IMR-90 (cell line): ENCODE measurements at regions of chr1 and their contacts with region 1.

Region 1: DNA sequence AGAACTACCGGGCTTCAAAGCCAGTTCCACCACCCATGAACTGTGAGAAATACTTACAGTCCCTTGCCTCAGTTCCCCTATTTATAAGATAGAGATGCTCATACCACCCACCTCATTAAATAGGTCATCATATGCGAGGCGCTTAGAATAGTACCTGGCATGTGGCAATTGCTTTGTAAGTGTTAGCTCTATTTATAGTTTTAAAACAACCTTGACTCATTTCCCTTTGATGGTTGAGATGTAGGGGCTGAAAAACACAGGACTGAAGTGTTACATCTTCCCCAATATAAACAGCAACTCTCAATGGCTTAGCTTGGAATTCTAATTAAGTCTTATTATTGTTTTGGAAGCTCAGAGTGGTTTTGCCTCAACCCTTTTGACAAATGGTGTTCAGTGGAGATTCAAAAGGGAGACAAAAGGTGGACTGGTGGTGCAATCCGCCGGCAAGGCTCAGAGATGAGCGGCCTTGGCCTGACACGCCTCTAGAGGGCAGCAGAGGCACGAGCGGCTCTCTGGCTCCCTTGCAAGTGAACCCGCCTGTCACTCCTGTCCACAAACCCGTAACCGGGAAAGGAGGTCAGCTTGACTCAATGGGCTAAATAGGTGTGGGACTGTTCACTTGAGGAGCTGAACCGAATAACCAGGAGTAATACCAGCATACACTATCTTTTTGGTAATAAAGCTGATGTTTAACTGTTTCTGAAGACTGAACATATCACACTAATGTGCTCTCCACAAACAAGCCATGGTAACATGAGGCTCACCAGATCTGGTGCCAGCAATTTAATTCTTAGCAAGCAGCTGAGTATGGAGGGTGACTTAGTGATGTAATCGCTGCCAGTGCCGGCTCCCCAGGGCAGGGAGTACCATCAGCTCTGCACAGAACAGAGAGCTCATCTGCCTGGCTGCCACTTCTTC is 19.5 kb upstream of the SMYD2 start:
- DNase-seq: peak; percentile 69
- ATAC-seq: peak; percentile 99
- H3K4me3 ChIP-seq: no peak overlapping the region
- H3K27ac ChIP-seq: no peak overlapping the region
- H3K4me1 ChIP-seq: peaks cover 4% of the 10 kb centered on the region; the same call in 1 of the 2 replicates
- H3K27me3 ChIP-seq: peaks cover 13% of the 10 kb centered on the region
- CTCF ChIP-seq: peak; percentile 91
- POLR2A ChIP-seq: no peak
- RAD21 ChIP-seq: peak; percentile 91

Region 2: GRCh38 chr1:214213136-214213535 is 48.3 kb before region 1 on chr1:
- CTCF ChIA-PET with region 1: interaction called, 17 read pairs
- POLR2A ChIA-PET with region 1: no interaction called
- dilution Hi-C with region 1: no loop called
- in situ Hi-C with region 1: no loop called
- intact Hi-C with region 1: loop called (anchors 2 kb)
- DNase-seq: peak; percentile 18
- ATAC-seq: peak; percentile 48
- H3K4me3 ChIP-seq: no peak overlapping the region
- H3K27ac ChIP-seq: no peak overlapping the region
- H3K4me1 ChIP-seq: no peaks in the 10 kb centered on the region; the same call in 1 of the 2 replicates
- H3K27me3 ChIP-seq: peaks cover 38% of the 10 kb centered on the region
- CTCF ChIP-seq: no peak
- POLR2A ChIP-seq: no peak
- RAD21 ChIP-seq: no peak

Region 3: GRCh38 chr1:214251354-214251753 is 10.1 kb before region 1 on chr1:
- CTCF ChIA-PET with region 1: interaction called, 15 read pairs
- POLR2A ChIA-PET with region 1: no interaction called
- dilution Hi-C with region 1: no loop called
- in situ Hi-C with region 1: no loop called
- intact Hi-C with region 1: no loop called
- DNase-seq: no peak
- ATAC-seq: no peak
- H3K4me3 ChIP-seq: no peak overlapping the region
- H3K27ac ChIP-seq: no peak overlapping the region
- H3K4me1 ChIP-seq: peaks cover 4% of the 10 kb centered on the region; the same call in 1 of the 2 replicates
- H3K27me3 ChIP-seq: no peaks in the 10 kb centered on the region; the same call in 1 of the 2 replicates
- CTCF ChIP-seq: no peak
- POLR2A ChIP-seq: no peak
- RAD21 ChIP-seq: no peak

Region 4: DNA sequence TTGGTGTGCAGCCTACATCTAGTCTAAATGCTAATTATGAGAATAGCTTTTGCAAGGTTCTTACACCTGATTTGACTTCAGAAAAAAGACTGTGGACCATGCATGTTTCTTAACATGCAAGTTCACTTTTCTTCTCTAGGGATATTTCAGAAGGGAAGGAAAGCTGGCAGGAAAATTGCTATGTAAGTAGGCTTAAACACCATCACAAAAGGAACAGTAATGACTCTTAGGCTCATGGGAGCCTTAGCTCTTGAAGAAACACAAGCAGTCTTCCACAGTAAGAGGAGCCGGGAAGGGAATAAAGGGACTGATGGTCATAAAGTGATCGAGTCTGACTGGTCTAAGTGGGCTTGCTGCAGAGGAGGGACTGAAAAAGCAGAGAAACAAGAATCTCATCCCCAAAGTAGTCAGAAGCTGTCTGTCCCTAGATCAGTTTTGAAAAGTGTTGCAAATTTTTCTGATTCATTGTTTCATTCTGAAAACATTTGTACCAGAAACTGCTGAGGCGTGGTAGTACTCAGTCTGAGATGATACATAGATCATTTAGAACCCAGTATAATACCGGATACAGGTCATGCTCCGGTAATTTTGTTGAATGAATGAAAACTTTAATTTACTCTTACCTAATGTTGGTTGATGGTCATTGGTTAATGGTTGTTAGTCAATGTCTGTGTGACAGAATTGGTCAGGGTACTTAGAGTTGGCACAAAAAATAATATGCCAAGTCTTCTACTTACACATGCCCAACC is 60.4 kb after region 1 on chr1:
- CTCF ChIA-PET with region 1: interaction called, 79 read pairs
- POLR2A ChIA-PET with region 1: no interaction called
- dilution Hi-C with region 1: no loop called
- in situ Hi-C with region 1: no loop called
- intact Hi-C with region 1: no loop called
- DNase-seq: no peak
- ATAC-seq: no peak
- H3K4me3 ChIP-seq: no peak overlapping the region
- H3K27ac ChIP-seq: no peak overlapping the region
- H3K4me1 ChIP-seq: no peaks in the 10 kb centered on the region
- H3K27me3 ChIP-seq: no peaks in the 10 kb centered on the region
- CTCF ChIP-seq: no peak
- POLR2A ChIP-seq: no peak
- RAD21 ChIP-seq: no peak